Activated CD4-positive, alpha-beta T cell treated with anti-CD3 and anti-CD28 coated beads, Interleukin-2, amount 10 ng/mL, durations not matched to agents 24 days and 14 days (primary cell): ENCODE measurements at regions of chr4 and their contacts with region 1.

Region 1: GRCh38 chr4:10096201-10096977 is 20.2 kb downstream of the WDR1 start:
- DNase-seq: peak; percentile 92
- H3K4me3 Mint-ChIP-seq: peak overlapping the region; percentile 66
- H3K27ac Mint-ChIP-seq: peak overlapping the region; percentile 94
- H3K4me1 Mint-ChIP-seq: peaks cover 89% of the 10 kb centered on the region
- H3K27me3 Mint-ChIP-seq: no peaks in the 10 kb centered on the region

Region 2: DNA sequence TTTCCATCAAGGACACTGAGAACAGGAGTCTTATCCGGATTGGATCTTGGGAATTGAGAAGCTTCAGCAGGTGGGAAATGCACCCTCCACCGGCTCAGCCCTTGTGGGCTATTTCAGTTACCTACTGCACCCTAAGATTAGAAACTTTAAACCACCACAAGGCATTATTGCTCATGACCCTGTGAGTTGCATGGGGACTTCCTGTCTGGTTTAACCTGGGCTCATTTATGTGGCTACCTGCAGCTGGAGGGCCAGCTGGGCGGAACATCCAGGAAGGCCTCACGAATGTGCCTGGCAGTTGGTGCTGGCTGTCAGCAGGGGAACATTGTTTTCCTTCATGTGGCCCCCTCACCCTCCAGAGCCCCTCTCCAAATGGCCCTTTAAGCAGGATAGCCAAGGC is 488.1 kb before region 1 on chr4:
- intact Hi-C with region 1: loop called (anchors 10 kb)
- DNase-seq: no peak
- H3K4me3 Mint-ChIP-seq: no peak overlapping the region
- H3K27ac Mint-ChIP-seq: no peak overlapping the region
- H3K4me1 Mint-ChIP-seq: peaks cover 31% of the 10 kb centered on the region
- H3K27me3 Mint-ChIP-seq: no peaks in the 10 kb centered on the region

Region 3: GRCh38 chr4:9952415-9952950 is 143.9 kb before region 1 on chr4:
- intact Hi-C with region 1: no loop called
- DNase-seq: peak; percentile 45
- H3K4me3 Mint-ChIP-seq: no peak overlapping the region
- H3K27ac Mint-ChIP-seq: no peak overlapping the region
- H3K4me1 Mint-ChIP-seq: no peaks in the 10 kb centered on the region
- H3K27me3 Mint-ChIP-seq: peaks cover 4% of the 10 kb centered on the region

Region 4: GRCh38 chr4:10106421-10107039 is 10.1 kb after region 1 on chr4:
- intact Hi-C with region 1: loop called (anchors 1 kb)
- DNase-seq: peak; percentile 80
- H3K4me3 Mint-ChIP-seq: peak overlapping the region; percentile 74
- H3K27ac Mint-ChIP-seq: peak overlapping the region; percentile 89
- H3K4me1 Mint-ChIP-seq: peaks cover 92% of the 10 kb centered on the region
- H3K27me3 Mint-ChIP-seq: no peaks in the 10 kb centered on the region

Region 5: GRCh38 chr4:10116580-10117358 is 20.4 kb after region 1 on chr4 and contains the start of gene WDR1:
- intact Hi-C with region 1: loop called (anchors 1 kb)
- DNase-seq: peak; percentile 97
- H3K4me3 Mint-ChIP-seq: peak within 1 kb of the TSS; percentile 98
- H3K27ac Mint-ChIP-seq: peak within 1 kb of the TSS; percentile 95
- H3K4me1 Mint-ChIP-seq: peaks cover 70% of the 10 kb centered on the region
- H3K27me3 Mint-ChIP-seq: no peaks in the 10 kb centered on the region
- total RNA-seq, gene WDR1: 369 and 376 TPM in 2 replicates